PC-3 (cell line): ENCODE measurements at regions of chr17 and their contacts with region 1.

Region 1: DNA sequence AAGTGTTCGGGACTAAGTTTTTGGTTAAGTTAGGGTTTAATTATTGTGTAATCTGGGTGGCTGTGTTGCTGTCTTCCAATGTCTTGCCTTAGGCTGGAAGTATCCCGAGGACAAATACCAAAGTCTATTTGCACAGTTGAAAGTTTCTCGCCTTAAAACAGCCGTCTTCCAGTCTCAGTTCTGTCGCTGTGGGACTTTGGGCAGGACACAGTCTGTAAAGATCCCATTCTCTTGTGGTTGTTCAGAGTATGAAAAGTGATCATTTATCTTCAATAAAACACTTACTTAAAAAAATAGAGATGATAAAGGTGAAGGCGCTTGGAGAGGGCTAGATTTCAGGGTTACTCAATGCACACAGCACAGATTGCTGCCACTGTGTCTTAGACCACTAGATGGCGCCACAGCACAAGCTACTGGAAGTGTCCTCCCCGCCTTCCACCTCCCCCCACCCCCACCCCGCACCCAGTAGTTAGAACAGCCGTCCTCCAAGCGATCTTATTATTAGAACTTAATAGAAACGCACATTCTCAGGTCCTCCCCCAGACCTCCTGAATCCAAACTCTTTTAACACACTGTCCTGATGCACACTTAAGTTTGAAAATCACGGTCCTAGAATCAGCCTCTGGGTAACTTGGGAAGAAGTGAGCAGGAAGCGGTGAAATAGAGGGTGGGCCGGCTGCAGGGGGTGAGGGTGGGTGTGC is 45.9 kb downstream of the AKAP1 start:
- DNase-seq: peak; percentile 96
- ATAC-seq: peak; percentile 95
- H3K4me3 ChIP-seq: peak overlapping the region; percentile 42
- H3K27ac ChIP-seq: no peak overlapping the region
- H3K4me1 ChIP-seq: peaks cover 7% of the 10 kb centered on the region
- H3K27me3 ChIP-seq: no peaks in the 10 kb centered on the region
- CTCF ChIP-seq: peak; percentile 83

Region 2: DNA sequence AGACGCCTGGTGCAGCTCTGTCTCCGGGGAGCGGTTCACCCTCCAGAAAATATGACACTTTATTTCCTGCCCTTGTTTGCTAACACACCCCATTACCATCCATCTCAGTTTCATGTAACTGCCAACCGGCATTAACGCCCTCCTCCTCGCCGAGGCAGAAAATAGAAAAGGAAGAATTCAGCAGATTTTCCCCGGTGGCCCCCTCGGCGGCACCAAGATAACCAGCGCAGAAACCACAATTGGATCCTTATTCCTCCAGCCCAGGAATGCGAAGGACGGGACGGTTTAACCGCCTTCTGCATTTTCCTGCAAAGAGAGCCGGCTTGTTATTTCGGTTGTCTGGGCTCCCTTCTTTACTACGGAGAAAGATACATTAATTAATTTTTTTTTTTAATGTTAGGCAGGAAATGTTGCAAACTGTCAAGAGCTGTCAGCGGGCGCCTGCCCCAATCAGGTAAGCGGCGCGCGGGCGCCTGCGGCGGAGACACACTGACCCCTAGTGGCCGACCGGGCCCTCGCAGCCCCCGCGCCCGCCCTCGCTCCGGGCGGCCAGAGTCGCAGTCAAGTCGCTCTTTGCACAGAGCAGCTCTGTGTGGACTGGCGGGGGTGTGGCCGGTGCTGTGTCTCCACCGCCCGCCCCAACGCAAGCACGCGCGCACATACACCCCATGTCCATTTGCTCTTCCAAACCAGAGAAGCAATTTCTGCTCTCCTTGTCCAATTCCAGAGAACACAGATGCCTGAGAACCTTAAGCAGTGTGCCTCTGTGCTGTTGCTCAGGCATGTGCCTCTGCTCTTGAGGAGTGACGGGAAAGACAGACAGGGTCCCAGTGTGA is 350.8 kb before region 1 on chr17:
- CTCF ChIA-PET with region 1: no interaction called
- POLR2A ChIA-PET with region 1: no interaction called
- intact Hi-C with region 1: no loop called
- DNase-seq: peak; percentile 95
- ATAC-seq: peak; percentile 91
- H3K4me3 ChIP-seq: peak overlapping the region; percentile 70
- H3K27ac ChIP-seq: peak overlapping the region; percentile 37
- H3K4me1 ChIP-seq: peaks cover 52% of the 10 kb centered on the region
- H3K27me3 ChIP-seq: no peaks in the 10 kb centered on the region
- CTCF ChIP-seq: peak; percentile 97

Region 3: GRCh38 chr17:57068222-57068658 is 62.7 kb before region 1 on chr17:
- CTCF ChIA-PET with region 1: no interaction called
- POLR2A ChIA-PET with region 1: no interaction called
- intact Hi-C with region 1: no loop called
- DNase-seq: no peak
- ATAC-seq: peak; percentile 56
- H3K4me3 ChIP-seq: no peak overlapping the region
- H3K27ac ChIP-seq: no peak overlapping the region
- H3K4me1 ChIP-seq: no peaks in the 10 kb centered on the region
- H3K27me3 ChIP-seq: no peaks in the 10 kb centered on the region
- CTCF ChIP-seq: no peak

Region 4: GRCh38 chr17:57243171-57243948 is 112.4 kb after region 1 on chr17:
- CTCF ChIA-PET with region 1: no interaction called
- POLR2A ChIA-PET with region 1: no interaction called
- intact Hi-C with region 1: loop called (anchors 2 kb)
- DNase-seq: peak; percentile 83
- ATAC-seq: peak; percentile 73
- H3K4me3 ChIP-seq: no peak overlapping the region
- H3K27ac ChIP-seq: no peak overlapping the region
- H3K4me1 ChIP-seq: no peaks in the 10 kb centered on the region
- H3K27me3 ChIP-seq: no peaks in the 10 kb centered on the region
- CTCF ChIP-seq: peak; percentile 100

Region 5: GRCh38 chr17:57597531-57598453 is 466.9 kb after region 1 on chr17:
- CTCF ChIA-PET with region 1: no interaction called
- POLR2A ChIA-PET with region 1: no interaction called
- intact Hi-C with region 1: loop called (anchors 2 kb)
- DNase-seq: peak; percentile 85
- ATAC-seq: peak; percentile 90
- H3K4me3 ChIP-seq: no peak overlapping the region
- H3K27ac ChIP-seq: peak overlapping the region; percentile 38; the same call in 1 of the 2 replicates
- H3K4me1 ChIP-seq: peaks cover 6% of the 10 kb centered on the region
- H3K27me3 ChIP-seq: no peaks in the 10 kb centered on the region
- CTCF ChIP-seq: peak; percentile 98

Region 6: DNA sequence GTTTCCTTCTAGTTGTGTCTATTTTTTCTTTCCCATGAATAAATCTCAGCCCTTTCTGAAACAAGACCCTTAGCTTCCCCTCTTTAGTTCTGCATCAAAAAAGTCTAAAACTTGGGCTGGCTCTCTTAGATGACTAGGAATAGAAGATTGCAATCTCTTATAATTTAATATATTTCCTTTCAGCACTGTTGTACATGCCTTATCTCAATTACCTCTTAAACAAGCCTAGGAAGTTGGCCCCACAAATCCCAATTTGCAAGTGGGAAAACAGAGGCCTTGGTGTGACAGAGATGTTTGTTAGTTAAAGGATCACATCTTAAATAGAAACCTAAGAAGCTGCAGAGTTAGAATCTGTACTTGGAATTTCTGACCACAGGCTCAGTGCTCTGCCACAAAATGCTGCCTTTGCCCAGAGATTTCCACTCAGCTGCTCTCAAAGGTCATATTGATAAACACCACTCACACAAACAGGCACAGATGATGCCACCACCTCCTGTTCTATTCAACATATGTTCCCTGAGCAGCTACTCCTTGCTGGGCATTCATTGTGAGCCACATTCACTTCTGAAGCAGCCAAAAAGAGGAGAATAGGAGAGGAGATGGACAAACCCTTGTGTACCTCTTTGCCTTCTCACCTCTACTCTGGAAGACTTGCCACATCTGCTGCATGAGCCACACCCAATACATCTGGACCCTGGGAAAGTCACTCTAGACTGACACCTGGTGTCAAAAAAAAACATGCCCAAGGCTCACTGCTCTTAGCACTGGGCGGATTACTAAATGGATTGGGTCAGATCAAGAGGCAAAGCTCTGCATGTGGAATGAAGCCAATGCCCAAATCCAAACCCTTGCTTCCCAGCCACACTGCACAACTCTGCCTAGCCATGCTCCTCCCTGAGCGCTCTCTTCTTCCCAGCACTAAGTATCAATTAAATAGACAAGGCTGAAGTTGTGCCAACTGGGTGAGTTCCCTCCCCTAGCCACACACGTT is 608.8 kb after region 1 on chr17:
- CTCF ChIA-PET with region 1: no interaction called
- POLR2A ChIA-PET with region 1: no interaction called
- intact Hi-C with region 1: loop called (anchors 1 kb)
- DNase-seq: peak; percentile 75
- ATAC-seq: peak; percentile 82
- H3K4me3 ChIP-seq: no peak overlapping the region
- H3K27ac ChIP-seq: no peak overlapping the region
- H3K4me1 ChIP-seq: no peaks in the 10 kb centered on the region
- H3K27me3 ChIP-seq: peaks cover 37% of the 10 kb centered on the region
- CTCF ChIP-seq: peak; percentile 85

Region 7: GRCh38 chr17:57833179-57833939 is 702.4 kb after region 1 on chr17:
- CTCF ChIA-PET with region 1: interaction called, 3 read pairs
- POLR2A ChIA-PET with region 1: no interaction called
- intact Hi-C with region 1: loop called (anchors 2 kb)
- DNase-seq: peak; percentile 80
- ATAC-seq: peak; percentile 32
- H3K4me3 ChIP-seq: no peak overlapping the region; the same call in 1 of the 2 replicates
- H3K27ac ChIP-seq: no peak overlapping the region
- H3K4me1 ChIP-seq: peaks cover 27% of the 10 kb centered on the region
- H3K27me3 ChIP-seq: no peaks in the 10 kb centered on the region
- CTCF ChIP-seq: peak; percentile 99